ENCODE measurements at regions of chr11 and their contacts with region 1.

Region 1: DNA sequence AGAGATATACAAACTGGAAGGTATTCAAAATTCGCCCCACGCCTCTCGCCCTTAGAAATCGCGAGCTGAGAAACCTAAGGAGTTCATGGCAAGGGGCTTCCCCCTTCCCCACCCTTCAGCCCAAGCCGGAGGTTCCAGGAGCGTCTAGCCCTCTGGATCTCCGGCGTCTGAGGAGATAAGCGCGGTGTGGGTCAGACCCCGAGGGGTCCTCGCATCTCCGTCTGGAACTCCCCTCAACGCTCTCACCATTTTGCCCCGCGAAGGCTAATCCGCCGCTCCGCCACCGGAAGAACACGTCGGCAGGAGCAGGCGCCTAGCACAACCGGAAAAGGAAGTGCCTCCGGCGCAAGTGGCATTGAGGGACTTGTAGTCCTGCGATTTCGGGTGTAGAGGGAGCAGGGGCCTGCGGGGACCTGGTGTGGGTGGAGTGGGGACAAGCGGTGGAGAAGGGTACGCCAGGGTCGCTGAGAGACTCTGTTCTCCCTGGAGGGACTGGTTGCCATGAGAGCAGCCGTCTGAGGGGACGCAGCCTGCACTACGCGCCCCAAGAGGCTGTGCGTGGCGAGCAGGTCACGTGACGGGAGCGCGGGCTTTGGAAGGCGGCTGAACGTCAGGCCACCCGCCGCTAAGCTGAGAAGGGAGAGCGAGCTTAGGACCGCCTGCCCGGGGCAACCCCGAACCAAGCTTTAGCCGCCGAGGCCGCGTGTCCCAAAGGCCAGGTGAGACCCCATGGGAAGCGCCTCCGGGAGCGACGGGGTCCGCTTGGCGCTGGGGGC is at the starts of genes FEN1 and TMEM258:
- DNase-seq: peak; percentile 89
- ATAC-seq: peak; percentile 92
- H3K4me3 Mint-ChIP-seq: peak within 1 kb of the TSS; percentile 98
- H3K27ac Mint-ChIP-seq: peak within 1 kb of the TSS; percentile 100
- H3K4me1 Mint-ChIP-seq: peaks cover 24% of the 10 kb centered on the region
- H3K27me3 Mint-ChIP-seq: no peaks in the 10 kb centered on the region
- CTCF ChIP-seq: no peak
- total RNA-seq, gene FEN1: 23.9 and 25.4 TPM in 2 replicates
- total RNA-seq, gene TMEM258: 87.4 and 94.0 TPM in 2 replicates

Region 2: DNA sequence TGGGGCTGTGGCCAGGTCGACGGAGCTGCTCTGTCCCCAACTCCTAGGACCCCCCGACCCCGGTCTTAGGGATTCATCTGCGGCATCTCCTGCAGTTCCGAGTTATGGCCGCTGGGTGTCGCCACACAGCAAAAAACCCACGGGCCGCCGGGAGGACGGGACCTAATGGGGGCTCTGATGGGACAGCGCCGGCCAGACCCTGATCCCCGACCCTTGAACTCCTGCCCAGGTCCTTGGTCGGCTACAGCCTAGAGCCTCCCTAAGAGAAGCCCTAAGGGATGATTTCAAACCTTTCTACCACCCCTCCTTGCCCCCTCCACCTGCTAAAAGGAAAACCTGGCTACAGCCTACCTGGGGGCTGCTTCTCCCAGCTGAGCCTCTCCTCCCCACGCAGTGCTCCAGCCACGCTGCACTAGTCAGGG is 314.8 kb before region 1 on chr11:
- CTCF ChIA-PET with region 1: no interaction called
- POLR2A ChIA-PET with region 1: no interaction called
- intact Hi-C with region 1: no loop called
- DNase-seq: peak; percentile 61
- ATAC-seq: peak; percentile 56
- H3K4me3 Mint-ChIP-seq: no peak overlapping the region
- H3K27ac Mint-ChIP-seq: no peak overlapping the region
- H3K4me1 Mint-ChIP-seq: no peaks in the 10 kb centered on the region
- H3K27me3 Mint-ChIP-seq: peaks cover 2% of the 10 kb centered on the region
- CTCF ChIP-seq: peak; percentile 50

Region 3: GRCh38 chr11:61725781-61726231 is 66.7 kb before region 1 on chr11:
- CTCF ChIA-PET with region 1: no interaction called
- POLR2A ChIA-PET with region 1: no interaction called
- intact Hi-C with region 1: no loop called
- DNase-seq: no peak
- ATAC-seq: no peak
- H3K4me3 Mint-ChIP-seq: no peak overlapping the region
- H3K27ac Mint-ChIP-seq: no peak overlapping the region
- H3K4me1 Mint-ChIP-seq: no peaks in the 10 kb centered on the region
- H3K27me3 Mint-ChIP-seq: no peaks in the 10 kb centered on the region
- CTCF ChIP-seq: no peak

Region 4: DNA sequence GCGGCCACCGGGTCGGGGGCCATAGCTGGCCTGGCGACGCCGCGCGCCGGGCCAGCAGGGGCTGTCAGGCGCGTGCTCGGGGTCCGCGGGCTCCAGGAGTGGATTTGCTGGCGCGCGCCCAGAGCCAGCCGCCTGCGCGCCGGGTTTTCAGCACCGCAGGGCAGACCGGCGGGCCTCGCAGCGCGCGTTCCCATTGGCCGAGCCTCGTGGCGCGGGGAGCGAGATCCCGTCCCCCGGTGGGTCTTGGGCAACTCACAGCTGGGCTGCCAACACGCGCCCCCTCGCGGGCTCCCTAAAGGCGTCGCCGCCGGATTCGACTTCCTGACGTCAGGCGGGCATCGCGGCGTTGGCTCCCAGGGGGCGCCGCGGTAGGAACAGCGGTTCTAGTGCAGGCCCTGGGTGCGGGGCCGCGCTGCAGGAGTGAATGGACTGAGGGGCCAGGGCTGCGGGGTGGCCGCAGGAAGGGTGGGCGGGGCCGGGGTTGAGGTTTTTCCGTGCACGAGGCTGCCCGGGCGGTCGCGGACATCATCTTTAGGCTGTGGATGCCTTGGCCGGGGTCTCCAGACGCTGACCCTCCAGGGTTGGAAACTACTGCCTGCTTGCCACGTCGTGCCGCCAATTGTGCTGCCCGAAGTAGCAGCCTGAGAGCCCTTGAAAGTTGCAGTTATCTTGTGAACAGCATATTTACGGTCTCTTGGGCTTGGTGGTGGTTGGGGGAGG is 24.4 kb after region 1 on chr11 and contains the start of gene FADS1:
- CTCF ChIA-PET with region 1: interaction called, 58 read pairs
- POLR2A ChIA-PET with region 1: interaction called, 27 read pairs
- intact Hi-C with region 1: loop called (anchors 1 kb)
- DNase-seq: peak; percentile 75
- ATAC-seq: peak; percentile 63
- H3K4me3 Mint-ChIP-seq: peak within 1 kb of the TSS; percentile 92
- H3K27ac Mint-ChIP-seq: peak within 1 kb of the TSS; percentile 72
- H3K4me1 Mint-ChIP-seq: peaks cover 16% of the 10 kb centered on the region
- H3K27me3 Mint-ChIP-seq: peaks cover 4% of the 10 kb centered on the region
- CTCF ChIP-seq: no peak
- total RNA-seq, gene FADS1: 19.6 and 23.3 TPM in 2 replicates

Region 5: GRCh38 chr11:61899146-61899841 is 106.8 kb after region 1 on chr11:
- CTCF ChIA-PET with region 1: interaction called, 55 read pairs
- POLR2A ChIA-PET with region 1: no interaction called
- intact Hi-C with region 1: loop called (anchors 1 kb)
- DNase-seq: peak; percentile 97
- ATAC-seq: peak; percentile 99
- H3K4me3 Mint-ChIP-seq: no peak overlapping the region
- H3K27ac Mint-ChIP-seq: peak overlapping the region; percentile 50
- H3K4me1 Mint-ChIP-seq: peaks cover 22% of the 10 kb centered on the region
- H3K27me3 Mint-ChIP-seq: no peaks in the 10 kb centered on the region
- CTCF ChIP-seq: peak; percentile 90

Region 6: GRCh38 chr11:62081378-62082291 is 289.1 kb after region 1 on chr11:
- CTCF ChIA-PET with region 1: interaction called, 167 read pairs
- POLR2A ChIA-PET with region 1: interaction called, 10 read pairs
- intact Hi-C with region 1: loop called (anchors 1 kb)
- DNase-seq: peak; percentile 65
- ATAC-seq: peak; percentile 82
- H3K4me3 Mint-ChIP-seq: peak overlapping the region; percentile 5
- H3K27ac Mint-ChIP-seq: no peak overlapping the region
- H3K4me1 Mint-ChIP-seq: peaks cover 7% of the 10 kb centered on the region
- H3K27me3 Mint-ChIP-seq: no peaks in the 10 kb centered on the region
- CTCF ChIP-seq: peak; percentile 59

Region 7: GRCh38 chr11:62208785-62209144 is 416.3 kb after region 1 on chr11:
- CTCF ChIA-PET with region 1: no interaction called
- POLR2A ChIA-PET with region 1: no interaction called
- intact Hi-C with region 1: loop called (anchors 2 kb)
- DNase-seq: no peak
- ATAC-seq: no peak
- H3K4me3 Mint-ChIP-seq: no peak overlapping the region
- H3K27ac Mint-ChIP-seq: no peak overlapping the region
- H3K4me1 Mint-ChIP-seq: no peaks in the 10 kb centered on the region
- H3K27me3 Mint-ChIP-seq: peaks cover 11% of the 10 kb centered on the region
- CTCF ChIP-seq: no peak

Region 8: GRCh38 chr11:62370743-62371440 is 578.4 kb after region 1 on chr11:
- CTCF ChIA-PET with region 1: no interaction called
- POLR2A ChIA-PET with region 1: no interaction called
- intact Hi-C with region 1: loop called (anchors 5 kb)
- DNase-seq: peak; percentile 25
- ATAC-seq: peak; percentile 82
- H3K4me3 Mint-ChIP-seq: peak overlapping the region; percentile 77
- H3K27ac Mint-ChIP-seq: peak overlapping the region; percentile 74
- H3K4me1 Mint-ChIP-seq: no peaks in the 10 kb centered on the region
- H3K27me3 Mint-ChIP-seq: no peaks in the 10 kb centered on the region
- CTCF ChIP-seq: no peak